A673 (cell line): ENCODE measurements at regions of chr6 and their contacts with region 1.

Region 1: GRCh38 chr6:27132532-27133280 is 114.8 kb upstream of the PRSS16 start:
- DNase-seq: peak; percentile 99
- H3K4me3 ChIP-seq: peak overlapping the region; percentile 59
- H3K27ac ChIP-seq: peak overlapping the region; percentile 96
- H3K4me1 ChIP-seq: peaks cover 32% of the 10 kb centered on the region
- H3K27me3 ChIP-seq: no peaks in the 10 kb centered on the region
- CTCF ChIP-seq: no peak

Region 2: DNA sequence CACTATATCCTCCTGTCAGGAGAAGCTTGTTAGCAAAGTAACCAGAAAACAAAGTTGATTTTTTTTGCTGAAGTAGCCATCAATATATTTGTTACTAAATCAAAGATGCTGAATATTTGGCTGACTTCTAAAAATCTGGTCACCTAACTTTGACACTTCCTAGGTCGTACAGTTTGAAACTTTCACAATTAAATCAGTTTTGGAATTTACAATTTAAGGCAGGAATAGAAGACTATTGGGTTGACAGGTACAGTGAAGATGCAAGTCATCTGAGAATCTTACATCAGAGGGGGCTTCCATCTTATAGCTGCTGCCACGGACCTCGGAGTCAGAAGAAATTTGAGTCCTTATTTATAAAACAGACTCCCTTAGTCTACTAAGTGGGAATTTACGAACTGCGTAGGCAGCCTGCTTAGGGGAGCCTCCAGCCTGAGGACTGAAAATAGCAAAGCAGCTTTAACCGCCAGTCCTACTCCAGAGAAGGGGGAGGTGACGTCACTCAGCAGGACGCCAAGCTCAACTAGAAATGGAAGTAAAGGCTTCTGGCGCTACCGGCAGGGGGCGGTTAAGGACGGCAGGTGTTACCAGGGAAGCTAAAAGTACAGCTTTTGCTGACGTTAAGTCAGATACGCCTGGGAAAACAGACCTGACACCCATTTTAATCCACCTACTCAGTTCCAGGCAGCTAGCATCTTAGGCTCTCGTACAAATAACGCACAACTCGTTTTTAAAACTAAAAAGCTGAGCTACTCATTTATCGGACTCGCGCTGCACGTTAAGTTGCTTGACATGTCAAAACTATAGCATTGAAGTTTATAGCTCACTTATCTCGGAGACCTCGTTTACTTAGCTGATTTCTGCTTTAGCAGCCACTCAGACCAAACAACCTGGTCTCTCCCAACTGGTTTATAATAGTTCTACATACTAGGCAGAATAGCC is 1106.5 kb before region 1 on chr6:
- CTCF ChIA-PET with region 1: no interaction called
- POLR2A ChIA-PET with region 1: no interaction called
- intact Hi-C with region 1: loop called (anchors 10 kb)
- DNase-seq: peak; percentile 97
- H3K4me3 ChIP-seq: peak overlapping the region; percentile 52
- H3K27ac ChIP-seq: peak overlapping the region; percentile 82
- H3K4me1 ChIP-seq: peaks cover 28% of the 10 kb centered on the region
- H3K27me3 ChIP-seq: no peaks in the 10 kb centered on the region
- CTCF ChIP-seq: peak; percentile 86

Region 3: DNA sequence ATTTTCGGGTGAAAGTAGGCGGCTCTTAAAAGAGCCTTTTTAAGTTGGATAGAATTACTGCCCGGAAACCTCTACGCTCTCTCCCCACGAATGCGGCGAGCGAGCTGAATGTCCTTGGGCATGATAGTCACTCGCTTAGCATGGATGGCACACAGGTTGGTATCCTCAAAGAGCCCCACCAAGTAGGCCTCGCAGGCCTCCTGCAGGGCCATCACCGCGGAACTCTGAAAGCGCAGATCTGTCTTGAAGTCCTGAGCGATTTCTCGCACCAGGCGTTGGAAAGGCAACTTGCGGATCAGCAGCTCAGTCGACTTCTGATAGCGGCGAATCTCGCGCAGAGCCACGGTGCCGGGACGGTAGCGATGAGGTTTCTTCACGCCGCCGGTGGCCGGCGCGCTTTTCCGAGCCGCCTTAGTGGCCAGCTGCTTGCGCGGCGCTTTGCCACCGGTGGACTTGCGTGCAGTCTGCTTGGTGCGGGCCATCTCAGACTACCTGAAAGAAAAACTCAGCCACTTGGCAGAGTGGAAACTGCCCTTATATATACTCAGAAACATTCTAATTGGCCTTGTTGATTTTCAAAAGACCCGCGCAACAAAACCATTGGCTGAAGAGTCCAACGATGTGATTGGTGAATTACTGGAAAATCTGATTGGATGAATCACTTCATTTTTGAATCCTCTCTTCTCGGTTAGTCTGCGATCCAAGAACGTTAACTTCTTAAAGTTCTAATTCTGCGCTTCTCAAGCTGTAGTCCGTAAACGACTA is 861.6 kb before region 1 on chr6:
- CTCF ChIA-PET with region 1: no interaction called
- POLR2A ChIA-PET with region 1: no interaction called
- intact Hi-C with region 1: loop called (anchors 5 kb)
- DNase-seq: peak; percentile 97
- H3K4me3 ChIP-seq: peak overlapping the region; percentile 66
- H3K27ac ChIP-seq: peak overlapping the region; percentile 94
- H3K4me1 ChIP-seq: peaks cover 16% of the 10 kb centered on the region
- H3K27me3 ChIP-seq: no peaks in the 10 kb centered on the region
- CTCF ChIP-seq: no peak

Region 4: GRCh38 chr6:26613689-26614683 is 518.7 kb before region 1 on chr6:
- CTCF ChIA-PET with region 1: no interaction called
- POLR2A ChIA-PET with region 1: interaction called, 12 read pairs
- intact Hi-C with region 1: no loop called
- DNase-seq: no peak
- H3K4me3 ChIP-seq: peak overlapping the region; percentile 33
- H3K27ac ChIP-seq: no peak overlapping the region
- H3K4me1 ChIP-seq: no peaks in the 10 kb centered on the region
- H3K27me3 ChIP-seq: peaks cover 30% of the 10 kb centered on the region
- CTCF ChIP-seq: no peak

Region 5: GRCh38 chr6:27275025-27275956 is 142.6 kb after region 1 on chr6:
- CTCF ChIA-PET with region 1: no interaction called
- POLR2A ChIA-PET with region 1: no interaction called
- intact Hi-C with region 1: no loop called
- DNase-seq: peak; percentile 64
- H3K4me3 ChIP-seq: no peak overlapping the region
- H3K27ac ChIP-seq: no peak overlapping the region
- H3K4me1 ChIP-seq: no peaks in the 10 kb centered on the region
- H3K27me3 ChIP-seq: no peaks in the 10 kb centered on the region
- CTCF ChIP-seq: no peak